Uterus (tissue), 4 donors: ENCODE measurements at regions of chr15 and their contacts with region 1.

Region 1: DNA sequence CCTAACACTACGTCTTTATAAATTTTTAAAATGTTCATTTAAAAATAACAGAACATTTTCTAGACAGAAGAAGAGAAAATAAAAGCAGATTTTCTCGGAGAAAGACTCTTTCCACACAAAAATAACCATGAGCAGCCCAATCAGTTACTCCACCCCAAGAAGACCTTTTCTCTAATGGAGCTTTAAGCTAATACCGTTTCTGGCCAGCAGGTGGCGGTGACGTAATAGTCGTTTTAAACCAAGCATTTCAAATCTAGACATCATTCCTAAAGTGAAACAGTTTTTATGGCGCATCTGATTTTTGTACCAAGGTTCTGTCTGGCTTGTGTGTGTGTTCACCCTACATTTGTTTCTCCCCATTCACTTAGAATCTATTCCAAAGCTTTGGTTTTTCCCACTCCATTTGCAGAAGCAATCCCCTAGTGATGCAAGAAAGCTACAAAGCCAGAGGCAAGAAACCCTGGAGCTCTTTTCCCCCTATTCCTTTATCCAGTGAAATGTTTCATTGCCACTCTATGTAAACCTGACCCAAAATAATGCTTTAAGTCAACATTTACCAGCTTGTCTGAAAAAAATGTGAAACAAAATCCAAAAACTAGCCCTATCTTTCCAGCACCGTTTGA is 336.7 kb upstream of the IGF1R start:
- DNase-seq: peak; percentile 73 to 77
- H3K4me3 ChIP-seq: no peak overlapping the region
- H3K27ac ChIP-seq: no peak overlapping the region
- H3K4me1 ChIP-seq: no peaks in the 10 kb centered on the region
- H3K27me3 ChIP-seq: no peaks in the 10 kb centered on the region
- CTCF ChIP-seq: peak; percentile 67 to 80 (median 75)
- POLR2A ChIP-seq: no peak

Region 2: GRCh38 chr15:98421419-98422129 is 109.9 kb after region 1 on chr15:
- intact Hi-C with region 1: loop called (anchors 5 kb)
- DNase-seq: peak; percentile 61 to 81
- H3K4me3 ChIP-seq: peak overlapping the region in 1 of 2 donors; percentile 25
- H3K27ac ChIP-seq: no peak overlapping the region
- H3K4me1 ChIP-seq: no peaks in the 10 kb centered on the region
- H3K27me3 ChIP-seq: no peaks in the 10 kb centered on the region
- CTCF ChIP-seq: peak; percentile 94 to 99 (median 96)
- POLR2A ChIP-seq: no peak